ENCODE measurements at regions of chrX and their contacts with region 1.

Region 1: GRCh38 chrX:15349046-15349445 is 13.7 kb upstream of the PIGA start:
- DNase-seq: peak in 2 of 4 donors; percentile 53 to 74
- ATAC-seq: peak; percentile 93
- H3K4me3 ChIP-seq: no peak overlapping the region
- H3K27ac ChIP-seq: no peak overlapping the region
- H3K4me1 ChIP-seq: no peaks in the 10 kb centered on the region
- H3K27me3 ChIP-seq: no peaks in the 10 kb centered on the region
- CTCF ChIP-seq: peak in 1 of 2 donors; percentile 47

Region 2: DNA sequence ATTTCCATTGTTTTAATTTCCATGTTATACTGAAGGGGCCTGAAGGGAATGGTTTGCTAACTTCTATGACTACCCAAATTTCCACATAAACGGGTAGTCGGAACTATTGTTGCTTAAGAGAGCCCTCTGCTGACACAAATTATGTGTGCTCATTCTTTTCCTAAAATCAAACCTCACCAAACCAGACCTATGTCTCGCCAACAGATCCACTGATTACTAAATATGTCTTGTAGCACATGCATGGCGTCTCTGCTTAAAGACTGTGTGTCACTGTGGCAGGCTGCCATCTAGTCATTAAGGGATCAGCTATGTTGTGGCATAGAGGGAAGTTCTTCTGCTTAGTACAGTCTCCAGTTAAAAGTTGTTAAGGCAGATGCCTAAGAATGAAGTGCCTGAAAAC is 119.0 kb after region 1 on chrX:
- intact Hi-C with region 1: loop called in 1 of 2 experiments (anchors 5 kb)
- DNase-seq: peak in 2 of 4 donors; percentile 47 to 63
- ATAC-seq: peak; percentile 67
- H3K4me3 ChIP-seq: no peak overlapping the region
- H3K27ac ChIP-seq: no peak overlapping the region
- H3K4me1 ChIP-seq: peaks cover 0 to 4% of the 10 kb centered on the region in 2 donors
- H3K27me3 ChIP-seq: peaks cover 0 to 16% of the 10 kb centered on the region in 2 donors
- CTCF ChIP-seq: peak in 1 of 2 donors; percentile 40